ENCODE measurements at regions of chr3 and their contacts with region 1.

Region 1: GRCh38 chr3:132730891-132731580 is 8.8 kb upstream of the NPHP3 start:
- DNase-seq: peak; percentile 8 to 39
- ATAC-seq: peak; percentile 80 to 92; a peak in 5 of 6 replicates
- H3K4me3 ChIP-seq: no peak overlapping the region
- H3K27ac ChIP-seq: no peak overlapping the region
- H3K4me1 ChIP-seq: no peaks in the 10 kb centered on the region
- CTCF ChIP-seq: peak; percentile 55
- EP300 ChIP-seq: no peak
- POLR2A ChIP-seq: no peak
- RAD21 ChIP-seq: peak; percentile 63 to 65

Region 2: GRCh38 chr3:132964266-132964665 is 233.2 kb after region 1 on chr3:
- CTCF ChIA-PET with region 1: no interaction called
- POLR2A ChIA-PET with region 1: no interaction called
- DNase-seq: no peak
- ATAC-seq: no peak
- H3K4me3 ChIP-seq: no peak overlapping the region
- H3K27ac ChIP-seq: no peak overlapping the region
- H3K4me1 ChIP-seq: no peaks in the 10 kb centered on the region
- CTCF ChIP-seq: no peak
- EP300 ChIP-seq: no peak
- POLR2A ChIP-seq: no peak
- RAD21 ChIP-seq: no peak

Region 3: DNA sequence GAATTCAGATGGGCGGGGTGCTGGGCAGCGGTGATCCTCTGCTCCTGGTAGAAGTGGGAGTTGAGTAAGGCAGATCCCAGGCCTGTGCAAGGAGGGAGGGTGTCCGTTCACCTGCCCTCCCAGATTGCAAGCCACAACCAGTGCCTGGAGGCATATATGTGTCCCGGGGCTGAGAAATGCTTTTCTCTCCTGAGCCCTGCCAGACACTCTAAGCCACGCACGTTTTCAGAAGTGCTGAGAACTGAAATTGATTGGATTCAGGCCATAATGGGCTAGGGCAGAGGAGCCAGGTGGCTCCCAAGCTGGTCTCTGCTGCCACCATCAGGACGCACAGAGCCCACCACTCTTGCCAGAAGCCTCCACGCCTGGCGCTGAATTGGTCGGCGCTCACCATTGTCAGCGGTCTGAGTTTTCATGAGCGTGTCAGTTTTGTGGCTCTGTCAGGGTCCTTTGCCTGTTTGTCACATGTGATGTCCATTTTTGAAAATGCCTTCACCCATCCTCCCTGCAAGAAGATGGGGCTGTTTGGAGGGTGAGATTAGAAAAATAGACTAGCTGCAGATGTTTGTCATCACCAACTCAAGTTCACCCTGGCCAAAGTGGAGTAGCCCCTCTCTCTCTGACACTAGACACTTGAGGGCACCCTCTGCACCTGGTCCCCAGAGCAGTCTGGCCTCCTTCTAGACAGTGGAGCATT is 653.4 kb after region 1 on chr3:
- CTCF ChIA-PET with region 1: interaction called, 13 read pairs
- POLR2A ChIA-PET with region 1: no interaction called
- DNase-seq: peak; percentile 11 to 30
- ATAC-seq: peak; percentile 79 to 94; a peak in 5 of 6 replicates
- H3K4me3 ChIP-seq: no peak overlapping the region
- H3K27ac ChIP-seq: no peak overlapping the region
- H3K4me1 ChIP-seq: no peaks in the 10 kb centered on the region
- CTCF ChIP-seq: peak; percentile 42; the same call in 2 of the 3 replicates
- EP300 ChIP-seq: no peak
- POLR2A ChIP-seq: no peak
- RAD21 ChIP-seq: peak; percentile 60 to 74

Region 4: DNA sequence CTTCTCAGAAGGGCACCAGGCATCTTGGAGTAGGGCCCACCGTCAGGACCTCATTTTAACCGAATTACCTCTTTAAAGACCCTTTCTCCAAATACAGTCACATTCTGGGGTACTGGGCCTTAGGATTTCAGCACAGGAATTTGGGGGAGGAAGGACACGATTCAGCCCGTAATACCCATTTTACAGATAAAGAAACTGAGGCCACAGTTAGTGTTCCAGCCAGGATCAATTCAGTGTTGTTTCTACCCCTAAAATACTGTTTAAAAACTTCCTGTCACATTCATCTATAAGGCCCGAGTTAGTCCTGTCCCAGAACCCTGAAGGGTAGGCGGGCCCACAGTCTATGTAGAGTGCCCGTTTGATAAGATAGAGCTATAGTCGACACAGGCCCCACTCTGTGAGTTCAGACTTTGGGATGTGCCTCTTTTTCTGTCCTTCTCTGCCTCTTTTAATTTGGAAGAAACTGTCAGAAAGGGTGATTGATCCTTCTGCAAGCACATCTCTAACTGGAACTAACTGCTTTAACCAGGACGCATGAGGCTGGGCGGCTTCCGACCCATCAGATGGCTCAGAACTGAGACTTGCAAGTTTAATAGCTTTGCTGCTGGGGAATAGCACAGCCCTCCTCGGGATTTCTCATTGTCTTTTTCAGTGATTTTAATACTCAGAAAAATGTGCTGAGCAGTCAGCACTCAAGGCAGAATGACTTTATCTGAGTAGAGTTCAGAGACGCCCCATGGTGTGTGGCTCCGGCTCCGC is 688.3 kb after region 1 on chr3:
- CTCF ChIA-PET with region 1: interaction called, 21 read pairs
- POLR2A ChIA-PET with region 1: no interaction called
- DNase-seq: no peak
- ATAC-seq: no peak
- H3K4me3 ChIP-seq: no peak overlapping the region
- H3K27ac ChIP-seq: no peak overlapping the region
- H3K4me1 ChIP-seq: no peaks in the 10 kb centered on the region
- CTCF ChIP-seq: no peak
- EP300 ChIP-seq: no peak
- POLR2A ChIP-seq: no peak
- RAD21 ChIP-seq: no peak

Region 5: GRCh38 chr3:133426721-133427120 is 695.7 kb after region 1 on chr3:
- CTCF ChIA-PET with region 1: interaction called, 21 read pairs
- POLR2A ChIA-PET with region 1: no interaction called
- DNase-seq: no peak
- ATAC-seq: no peak
- H3K4me3 ChIP-seq: no peak overlapping the region
- H3K27ac ChIP-seq: no peak overlapping the region
- H3K4me1 ChIP-seq: no peaks in the 10 kb centered on the region
- CTCF ChIP-seq: no peak
- EP300 ChIP-seq: no peak
- POLR2A ChIP-seq: no peak
- RAD21 ChIP-seq: no peak

Measured in A549 (cell line).